Stomach (tissue), 19 donors: ENCODE measurements at regions of chr11 and their contacts with region 1.

Region 1: GRCh38 chr11:63805844-63806415 is 7.3 kb upstream of the SPINDOC start:
- DNase-seq: peak in 1 of 2 donors; percentile 24
- H3K4me3 ChIP-seq: no peak overlapping the region
- H3K27ac ChIP-seq: no peak overlapping the region
- H3K4me1 ChIP-seq: no peaks in the 10 kb centered on the region
- H3K27me3 ChIP-seq: no peaks in the 10 kb centered on the region
- CTCF ChIP-seq: no peak
- EP300 ChIP-seq: no peak
- POLR2A ChIP-seq: no peak

Region 2: DNA sequence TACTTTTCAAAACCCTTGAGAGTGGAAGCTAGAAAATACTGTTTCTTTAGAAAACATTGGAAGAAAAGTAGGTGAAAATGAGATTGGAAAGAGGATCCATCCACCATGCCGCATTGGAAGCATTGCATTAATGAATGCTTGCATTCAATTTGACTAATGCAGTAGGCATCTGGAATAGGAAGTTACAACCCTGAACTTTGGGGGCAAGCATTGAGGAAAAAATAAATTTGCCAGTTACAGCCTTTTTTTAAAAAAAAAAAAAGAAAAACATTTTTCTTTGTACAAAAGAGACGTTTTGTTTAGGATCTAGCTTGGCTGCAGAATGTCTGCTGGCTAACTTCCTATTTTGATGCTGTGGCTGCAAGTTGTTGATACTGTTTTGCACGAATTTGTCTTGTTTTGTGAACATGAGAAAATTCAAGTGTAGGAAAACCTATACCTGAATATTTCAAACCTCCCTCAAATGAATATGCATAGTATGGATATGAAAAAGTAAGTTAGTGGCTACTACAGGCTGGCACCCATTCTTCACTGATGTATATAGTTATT is 96.5 kb before region 1 on chr11:
- intact Hi-C with region 1: no loop called
- DNase-seq: no peak
- H3K4me3 ChIP-seq: no peak overlapping the region
- H3K27ac ChIP-seq: no peak overlapping the region
- H3K4me1 ChIP-seq: peaks cover 0 to 23% (median 6%) of the 10 kb centered on the region in 4 donors
- H3K27me3 ChIP-seq: no peaks in the 10 kb centered on the region
- CTCF ChIP-seq: no peak
- EP300 ChIP-seq: no peak
- POLR2A ChIP-seq: no peak

Region 3: GRCh38 chr11:63769714-63770455 is 36.0 kb before region 1 on chr11:
- intact Hi-C with region 1: loop called (anchors 5 kb)
- DNase-seq: peak in 1 of 2 donors; percentile 62
- H3K4me3 ChIP-seq: peak overlapping the region; percentile 83 to 92 (median 88)
- H3K27ac ChIP-seq: peak overlapping the region in 4 of 5 donors; percentile 56 to 87 (median 76)
- H3K4me1 ChIP-seq: peaks cover 29 to 43% (median 39%) of the 10 kb centered on the region in 4 donors
- H3K27me3 ChIP-seq: peaks cover 0 to 17% (median 6%) of the 10 kb centered on the region in 3 donors
- CTCF ChIP-seq: no peak
- EP300 ChIP-seq: no peak
- POLR2A ChIP-seq: no peak

Region 4: GRCh38 chr11:63782749-63783148 is 23.2 kb before region 1 on chr11:
- intact Hi-C with region 1: no loop called
- DNase-seq: no peak
- H3K4me3 ChIP-seq: no peak overlapping the region
- H3K27ac ChIP-seq: no peak overlapping the region
- H3K4me1 ChIP-seq: peaks cover 0 to 3% (median 0%) of the 10 kb centered on the region in 4 donors
- H3K27me3 ChIP-seq: no peaks in the 10 kb centered on the region
- CTCF ChIP-seq: no peak
- EP300 ChIP-seq: no peak
- POLR2A ChIP-seq: no peak